Activated CD8-positive, alpha-beta memory T cell treated with anti-CD3 and anti-CD28 coated beads, Interleukin-2, amount 10 ng/mL, durations not matched to agents 7 days and 5 days (primary cell): ENCODE measurements at regions of chr20 and their contacts with region 1.

Region 1: DNA sequence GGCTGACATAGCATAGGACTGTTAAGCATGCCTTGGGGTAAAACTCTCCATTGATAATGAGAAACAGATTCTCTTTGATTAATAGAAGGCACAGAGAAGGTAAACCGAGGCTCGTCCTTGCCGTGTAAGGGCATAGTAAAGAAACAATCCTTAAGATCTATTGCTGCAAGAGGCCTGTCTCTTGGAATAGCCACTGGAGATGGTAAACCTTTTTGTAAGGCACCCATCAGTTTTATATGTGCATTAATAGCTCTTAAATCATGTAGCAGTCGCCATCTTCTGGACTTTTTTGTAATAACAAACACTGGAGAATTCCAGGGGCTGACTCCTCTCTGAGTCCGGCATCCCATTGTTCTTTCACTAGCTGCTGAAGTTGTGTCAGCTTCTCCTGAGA is 8.4 kb upstream of the ABHD12 start:
- DNase-seq: peak; percentile 45
- ATAC-seq: peak; percentile 51
- H3K4me3 Mint-ChIP-seq: no peak overlapping the region
- H3K27ac Mint-ChIP-seq: no peak overlapping the region
- H3K4me1 Mint-ChIP-seq: peaks cover 7% of the 10 kb centered on the region
- H3K27me3 Mint-ChIP-seq: peaks cover 12% of the 10 kb centered on the region

Region 2: GRCh38 chr20:24992487-24993205 is 406.4 kb before region 1 on chr20 and contains the start of gene APMAP:
- CTCF ChIA-PET with region 1: interaction called, 13 read pairs
- DNase-seq: peak; percentile 96
- ATAC-seq: peak; percentile 95
- H3K4me3 Mint-ChIP-seq: peak within 1 kb of the TSS; percentile 98
- H3K27ac Mint-ChIP-seq: peak within 1 kb of the TSS; percentile 93
- H3K4me1 Mint-ChIP-seq: peaks cover 50% of the 10 kb centered on the region
- H3K27me3 Mint-ChIP-seq: no peaks in the 10 kb centered on the region
- total RNA-seq, gene APMAP: 47.5 to 56.0 TPM

Region 3: DNA sequence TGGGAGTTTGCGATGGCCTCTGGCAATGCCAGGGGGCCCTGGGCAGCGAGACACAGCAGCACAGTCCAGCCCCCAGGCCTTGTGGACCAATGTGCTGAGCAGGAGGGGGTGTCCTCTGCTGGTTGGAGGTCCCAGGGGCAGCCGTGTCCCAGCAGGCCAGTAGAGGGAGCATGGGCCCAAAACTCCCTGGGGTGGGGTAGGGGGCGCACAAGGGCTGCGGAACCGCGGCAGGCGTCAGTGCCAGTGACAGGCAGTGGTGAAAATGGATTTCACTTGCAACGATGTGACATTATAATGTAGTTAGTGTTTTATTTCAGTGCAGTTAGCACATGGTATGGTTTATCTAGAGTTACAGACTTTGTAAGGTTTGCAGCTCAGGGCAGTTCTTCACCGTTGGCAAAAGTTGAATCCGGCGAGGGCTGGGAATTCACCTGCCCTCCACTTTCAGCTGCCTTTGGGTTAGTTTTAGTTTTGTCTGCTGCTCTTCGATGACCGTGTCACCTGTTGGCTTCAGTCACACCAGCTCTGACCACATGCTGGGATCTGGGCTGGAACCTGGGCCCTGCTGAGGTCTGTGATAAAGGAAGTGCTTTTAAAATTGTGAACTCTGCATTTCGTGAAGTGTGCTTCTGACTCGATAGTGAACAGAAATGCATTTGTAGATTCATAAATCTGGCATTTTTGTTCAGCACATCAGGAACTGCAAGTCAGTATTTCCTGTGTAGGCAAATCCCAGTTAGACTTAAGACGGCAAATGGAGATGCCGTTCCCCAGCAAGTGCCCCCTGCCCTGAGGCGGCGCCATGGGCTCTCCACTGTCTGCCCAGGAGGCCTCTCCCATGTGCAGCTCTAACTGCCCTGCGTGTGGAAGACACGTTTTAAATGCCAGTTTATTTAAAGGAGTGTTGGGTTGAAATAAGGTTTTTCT is 104.3 kb before region 1 on chr20:
- CTCF ChIA-PET with region 1: interaction called, 28 read pairs
- DNase-seq: peak; percentile 63
- ATAC-seq: peak; percentile 71
- H3K4me3 Mint-ChIP-seq: no peak overlapping the region
- H3K27ac Mint-ChIP-seq: peak overlapping the region; percentile 19
- H3K4me1 Mint-ChIP-seq: peaks cover 15% of the 10 kb centered on the region
- H3K27me3 Mint-ChIP-seq: no peaks in the 10 kb centered on the region

Region 4: DNA sequence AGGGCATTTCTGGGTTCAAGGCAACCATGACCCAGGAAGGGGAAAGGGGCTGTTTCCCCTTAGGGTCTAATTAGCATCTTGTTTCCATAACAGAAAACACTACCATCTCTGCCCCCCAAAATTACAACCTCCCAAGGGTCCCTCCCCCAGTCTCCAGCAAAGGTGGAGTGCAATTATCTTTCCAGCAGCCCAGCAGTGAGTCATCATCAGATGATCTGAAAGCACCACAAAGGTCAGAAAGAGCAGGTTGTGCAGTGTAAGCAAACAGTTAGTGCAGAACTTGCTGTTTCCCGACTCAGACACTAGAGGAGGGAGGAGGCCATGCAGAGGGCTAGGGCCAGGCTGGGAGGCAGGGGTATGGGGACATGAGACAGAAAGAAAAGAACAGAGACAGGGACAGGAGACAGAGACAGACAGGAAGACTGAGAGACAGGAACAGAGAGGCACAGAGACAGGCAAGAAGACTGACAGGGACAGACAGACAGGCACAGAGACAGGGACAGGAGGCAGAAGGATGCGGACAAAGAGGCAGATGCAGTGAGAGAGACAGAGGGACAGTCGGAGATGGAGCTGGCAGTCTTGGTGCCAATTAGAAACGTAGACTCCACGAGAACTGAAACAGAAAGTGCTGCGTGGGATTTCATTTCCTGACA is 88.6 kb before region 1 on chr20:
- CTCF ChIA-PET with region 1: interaction called, 27 read pairs
- DNase-seq: peak; percentile 83
- ATAC-seq: peak; percentile 95
- H3K4me3 Mint-ChIP-seq: peak overlapping the region; percentile 71
- H3K27ac Mint-ChIP-seq: peak overlapping the region; percentile 94
- H3K4me1 Mint-ChIP-seq: peaks cover 48% of the 10 kb centered on the region
- H3K27me3 Mint-ChIP-seq: no peaks in the 10 kb centered on the region